Mammary epithelial cell (primary cell): ENCODE measurements at regions of chr11 and their contacts with region 1.

Region 1: DNA sequence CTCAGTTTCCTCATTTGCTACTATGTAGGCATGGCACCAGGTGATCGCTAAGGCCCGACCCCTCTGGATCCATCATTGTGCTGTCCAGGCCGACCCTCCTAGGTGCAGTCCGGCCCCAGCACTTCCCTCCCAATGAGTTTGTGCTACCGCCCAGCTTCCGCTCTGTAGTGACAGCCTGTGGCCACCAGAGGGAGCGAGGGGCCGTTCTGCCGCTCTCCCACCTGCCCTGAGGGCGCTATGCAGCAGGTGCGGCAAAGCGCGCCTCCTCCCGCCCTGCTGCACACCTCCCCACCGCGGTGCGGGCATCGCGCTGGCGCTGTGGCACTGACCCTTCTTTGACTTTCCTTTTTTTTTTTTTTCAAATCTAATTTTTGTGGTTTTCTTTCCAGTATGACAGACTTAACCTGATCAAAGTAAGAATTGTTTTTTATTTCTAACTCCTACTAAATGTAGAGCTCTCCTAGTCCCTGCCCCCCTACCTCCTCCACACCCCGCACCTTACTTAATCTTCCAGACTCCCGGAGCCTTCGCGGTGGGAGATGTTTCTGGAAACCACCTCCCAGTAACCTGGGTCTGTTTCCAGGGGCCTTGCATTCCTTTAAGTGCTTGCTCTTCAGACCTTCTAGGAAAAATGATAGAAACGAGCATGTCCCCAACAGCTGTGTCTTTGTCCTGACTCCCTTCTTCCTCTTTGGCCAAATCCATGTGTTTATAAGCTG is 73.7 kb downstream of the SCN3B start:
- DNase-seq: peak; percentile 53
- H3K4me3 ChIP-seq: no peak overlapping the region
- H3K27ac ChIP-seq: no peak overlapping the region
- H3K4me1 ChIP-seq: no peaks in the 10 kb centered on the region
- H3K27me3 ChIP-seq: peaks cover 2% of the 10 kb centered on the region
- CTCF ChIP-seq: peak; percentile 83 to 96

Region 2: GRCh38 chr11:122294041-122294440 is 1286.7 kb before region 1 on chr11:
- CTCF ChIA-PET with region 1: no interaction called
- dilution Hi-C with region 1: no loop called
- in situ Hi-C with region 1: no loop called
- intact Hi-C with region 1: no loop called
- DNase-seq: no peak
- H3K4me3 ChIP-seq: no peak overlapping the region
- H3K27ac ChIP-seq: no peak overlapping the region
- H3K4me1 ChIP-seq: no peaks in the 10 kb centered on the region
- H3K27me3 ChIP-seq: peaks cover 4% of the 10 kb centered on the region
- CTCF ChIP-seq: no peak

Region 3: DNA sequence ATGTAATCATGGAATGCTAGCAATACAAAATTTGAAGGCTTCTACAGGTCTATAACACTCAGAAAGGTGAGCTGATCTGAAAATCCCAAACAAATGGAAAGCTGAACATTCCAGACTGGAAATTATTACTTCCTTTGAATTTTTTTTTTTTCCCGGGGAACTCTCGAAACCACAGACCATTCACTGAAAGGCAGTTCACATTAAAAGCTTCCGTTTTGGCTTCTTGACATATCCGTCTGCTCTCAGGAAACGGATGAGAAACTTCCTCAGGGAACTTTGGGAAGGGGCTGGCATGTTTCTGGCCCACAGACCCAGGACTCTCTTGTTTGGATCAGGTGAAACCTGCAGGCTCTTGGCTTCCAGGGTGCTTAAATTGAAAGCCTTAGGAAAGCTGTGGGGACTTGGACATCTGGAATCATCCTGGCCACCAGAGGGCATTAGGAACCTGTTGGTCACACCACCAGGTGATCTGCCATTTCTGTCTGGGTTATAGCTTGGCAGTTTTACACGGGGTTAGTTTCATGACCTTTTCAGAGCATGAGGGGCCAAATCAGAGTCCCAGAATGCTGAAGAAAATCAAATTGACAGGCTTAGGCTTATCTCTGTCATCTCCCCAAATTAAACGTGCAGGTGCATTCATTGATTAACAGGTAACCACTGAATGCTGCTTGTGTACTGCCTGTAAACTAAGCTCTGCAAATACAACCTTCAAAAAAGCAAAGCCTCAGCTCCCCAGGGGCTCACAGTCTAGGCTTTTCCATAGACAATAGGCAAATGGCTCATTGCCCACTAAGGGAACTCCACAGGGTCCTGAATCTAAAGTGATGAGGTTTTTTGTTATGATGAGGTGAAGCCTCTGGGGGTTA is 173.4 kb before region 1 on chr11:
- CTCF ChIA-PET with region 1: no interaction called
- dilution Hi-C with region 1: no loop called
- in situ Hi-C with region 1: no loop called
- intact Hi-C with region 1: loop called (anchors 10 kb)
- DNase-seq: peak; percentile 41
- H3K4me3 ChIP-seq: no peak overlapping the region
- H3K27ac ChIP-seq: no peak overlapping the region
- H3K4me1 ChIP-seq: no peaks in the 10 kb centered on the region
- H3K27me3 ChIP-seq: peaks cover 7% of the 10 kb centered on the region
- CTCF ChIP-seq: peak; percentile 84 to 87

Region 4: GRCh38 chr11:123511037-123511870 is 69.5 kb before region 1 on chr11:
- CTCF ChIA-PET with region 1: interaction called, 8 read pairs
- dilution Hi-C with region 1: no loop called
- in situ Hi-C with region 1: no loop called
- intact Hi-C with region 1: loop called (anchors 1 kb)
- DNase-seq: peak; percentile 82
- H3K4me3 ChIP-seq: no peak overlapping the region
- H3K27ac ChIP-seq: no peak overlapping the region
- H3K4me1 ChIP-seq: no peaks in the 10 kb centered on the region
- H3K27me3 ChIP-seq: no peaks in the 10 kb centered on the region
- CTCF ChIP-seq: peak; percentile 83 to 85

Region 5: DNA sequence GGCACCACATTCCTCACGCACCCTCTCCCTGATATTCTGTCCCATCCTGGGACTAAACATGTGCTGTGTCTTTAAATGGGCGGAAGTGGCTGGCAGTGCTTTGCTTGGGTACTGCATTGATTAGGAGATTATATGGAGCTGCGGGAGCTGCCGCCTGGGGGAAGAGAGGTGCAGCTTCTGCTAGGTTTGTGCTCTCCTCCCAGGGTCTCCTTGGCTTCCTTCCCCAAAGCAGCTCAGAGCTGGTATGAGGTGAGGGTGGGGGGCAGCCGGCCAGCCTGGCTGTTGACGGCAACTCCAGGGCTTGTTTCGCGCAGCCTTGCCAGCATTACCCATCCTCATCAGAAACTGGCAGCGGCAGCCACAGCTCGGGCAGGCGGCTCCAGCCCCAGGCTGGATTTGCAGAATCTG is 55.2 kb before region 1 on chr11:
- CTCF ChIA-PET with region 1: no interaction called
- dilution Hi-C with region 1: no loop called
- in situ Hi-C with region 1: no loop called
- intact Hi-C with region 1: no loop called
- DNase-seq: no peak
- H3K4me3 ChIP-seq: peak overlapping the region; percentile 33 to 43 (median 36)
- H3K27ac ChIP-seq: no peak overlapping the region
- H3K4me1 ChIP-seq: no peaks in the 10 kb centered on the region
- H3K27me3 ChIP-seq: peaks cover 17% of the 10 kb centered on the region
- CTCF ChIP-seq: no peak

Region 6: GRCh38 chr11:123560006-123560405 is 20.7 kb before region 1 on chr11:
- CTCF ChIA-PET with region 1: interaction called, 26 read pairs
- dilution Hi-C with region 1: no loop called
- in situ Hi-C with region 1: no loop called
- intact Hi-C with region 1: no loop called
- DNase-seq: no peak
- H3K4me3 ChIP-seq: no peak overlapping the region
- H3K27ac ChIP-seq: no peak overlapping the region
- H3K4me1 ChIP-seq: no peaks in the 10 kb centered on the region
- H3K27me3 ChIP-seq: peaks cover 9% of the 10 kb centered on the region
- CTCF ChIP-seq: no peak

Region 7: DNA sequence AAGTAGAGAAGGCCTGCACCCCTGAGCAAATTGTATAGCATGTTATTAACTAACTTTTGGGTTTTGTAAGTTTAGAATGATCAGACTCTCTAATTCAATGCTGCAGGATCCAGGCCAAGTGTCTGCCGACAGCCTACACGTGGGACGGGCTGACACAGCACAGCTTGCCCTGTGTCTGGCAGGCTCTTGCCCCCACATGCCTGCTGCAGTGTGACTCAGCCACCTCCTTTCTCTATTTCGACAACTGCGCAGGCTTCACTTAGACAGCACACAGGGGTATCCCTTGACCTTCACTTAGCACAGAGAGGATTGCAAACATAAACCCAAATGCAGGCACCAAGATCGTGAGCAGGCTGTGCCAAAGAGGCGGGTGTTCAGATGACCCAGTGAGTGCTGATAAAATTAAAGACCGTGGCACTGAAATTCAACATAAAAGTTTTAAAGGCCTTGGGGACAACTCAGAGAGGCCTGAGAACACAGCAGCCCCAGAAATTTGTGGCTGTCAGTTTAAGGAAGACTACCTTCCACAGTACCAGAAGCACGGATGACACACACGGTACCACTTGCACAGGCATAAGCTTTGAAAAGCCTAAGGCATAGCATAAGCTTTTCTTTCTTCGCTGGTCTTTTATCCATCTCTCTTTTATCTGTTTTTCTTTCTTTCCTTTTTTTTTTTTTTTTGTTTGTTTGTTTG is 35.9 kb after region 1 on chr11:
- CTCF ChIA-PET with region 1: no interaction called
- dilution Hi-C with region 1: no loop called
- in situ Hi-C with region 1: no loop called
- intact Hi-C with region 1: loop called (anchors 1 kb)
- DNase-seq: peak; percentile 82
- H3K4me3 ChIP-seq: no peak overlapping the region
- H3K27ac ChIP-seq: no peak overlapping the region
- H3K4me1 ChIP-seq: peaks cover 9% of the 10 kb centered on the region
- H3K27me3 ChIP-seq: no peaks in the 10 kb centered on the region
- CTCF ChIP-seq: no peak

Region 8: GRCh38 chr11:123640677-123641494 is 60.2 kb after region 1 on chr11:
- CTCF ChIA-PET with region 1: no interaction called
- dilution Hi-C with region 1: no loop called
- in situ Hi-C with region 1: no loop called
- intact Hi-C with region 1: loop called (anchors 5 kb)
- DNase-seq: peak; percentile 24
- H3K4me3 ChIP-seq: no peak overlapping the region
- H3K27ac ChIP-seq: no peak overlapping the region
- H3K4me1 ChIP-seq: no peaks in the 10 kb centered on the region
- H3K27me3 ChIP-seq: no peaks in the 10 kb centered on the region
- CTCF ChIP-seq: peak; percentile 72 to 98

Region 9: DNA sequence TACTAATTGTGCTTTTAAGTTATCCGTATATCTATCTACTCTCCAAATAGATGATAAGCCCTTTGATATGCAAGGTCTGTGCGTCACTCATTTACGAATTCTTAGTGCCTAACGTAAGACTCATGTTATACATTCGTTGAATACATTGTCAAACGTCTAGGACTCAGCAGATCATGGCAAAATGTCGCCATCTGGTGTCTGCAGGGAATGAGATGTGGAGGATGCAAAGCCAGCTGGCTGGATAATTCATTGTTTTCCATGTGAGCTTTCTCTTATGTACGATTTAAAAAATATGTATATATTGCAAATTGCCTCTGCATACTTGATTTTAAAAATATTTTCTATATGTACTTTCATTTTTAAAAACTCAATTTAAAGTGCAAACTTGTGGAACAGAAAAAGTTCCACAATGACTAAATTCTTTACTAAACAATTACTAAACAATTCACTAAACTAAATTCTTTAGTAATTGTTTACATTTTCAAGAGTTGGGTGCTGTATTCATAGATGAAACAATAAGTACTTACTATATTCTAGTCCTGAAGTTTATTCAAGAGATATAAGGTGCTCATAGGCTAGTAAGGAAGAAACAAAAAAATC is 127.0 kb after region 1 on chr11:
- CTCF ChIA-PET with region 1: interaction called, 3 read pairs
- dilution Hi-C with region 1: no loop called
- in situ Hi-C with region 1: loop called in 1 of 2 experiments (anchors 10 kb)
- intact Hi-C with region 1: loop called (anchors 1 kb)
- DNase-seq: peak; percentile 52
- H3K4me3 ChIP-seq: no peak overlapping the region
- H3K27ac ChIP-seq: no peak overlapping the region
- H3K4me1 ChIP-seq: no peaks in the 10 kb centered on the region
- H3K27me3 ChIP-seq: no peaks in the 10 kb centered on the region
- CTCF ChIP-seq: peak; percentile 84 to 90

Region 10: GRCh38 chr11:123738374-123738773 is 157.7 kb after region 1 on chr11:
- CTCF ChIA-PET with region 1: no interaction called
- dilution Hi-C with region 1: no loop called
- in situ Hi-C with region 1: no loop called
- intact Hi-C with region 1: no loop called
- DNase-seq: no peak
- H3K4me3 ChIP-seq: no peak overlapping the region
- H3K27ac ChIP-seq: no peak overlapping the region
- H3K4me1 ChIP-seq: peaks cover 15% of the 10 kb centered on the region
- H3K27me3 ChIP-seq: no peaks in the 10 kb centered on the region
- CTCF ChIP-seq: no peak